SK-N-SH (cell line): ENCODE measurements at regions of chr19 and their contacts with region 1.

Region 1: GRCh38 chr19:44845612-44846454 is at the start of gene NECTIN2:
- DNase-seq: peak; percentile 98
- H3K4me3 ChIP-seq: peak within 1 kb of the TSS; percentile 71 to 98
- H3K27ac ChIP-seq: peak within 1 kb of the TSS; percentile 61 to 92
- H3K4me1 ChIP-seq: peaks cover 19 to 21% of the 10 kb centered on the region in 2 experiments; a peak in 3 of 4 replicates
- H3K27me3 ChIP-seq: no peaks in the 10 kb centered on the region
- CTCF ChIP-seq: peak; percentile 93
- EP300 ChIP-seq: no peak
- RAD21 ChIP-seq: peak; percentile 50
- polyA plus RNA-seq, gene NECTIN2: 96.6 and 121 TPM in 2 replicates

Region 2: GRCh38 chr19:44800461-44800860 is 45.4 kb before region 1 on chr19:
- CTCF ChIA-PET with region 1: interaction called, 18 read pairs
- POLR2A ChIA-PET with region 1: no interaction called
- DNase-seq: peak; percentile 89
- H3K4me3 ChIP-seq: peak overlapping the region in 1 of 2 experiments; percentile 41; a peak in 1 of 4 replicates
- H3K27ac ChIP-seq: no peak overlapping the region
- H3K4me1 ChIP-seq: no peaks in the 10 kb centered on the region; a peak in 1 of 4 replicates
- H3K27me3 ChIP-seq: peaks cover 34% of the 10 kb centered on the region
- CTCF ChIP-seq: peak; percentile 86
- EP300 ChIP-seq: no peak
- RAD21 ChIP-seq: peak; percentile 75

Region 3: GRCh38 chr19:44808463-44809371 is 37.1 kb before region 1 on chr19 and contains the start of gene BCAM:
- CTCF ChIA-PET with region 1: interaction called, 18 read pairs
- POLR2A ChIA-PET with region 1: no interaction called
- DNase-seq: peak; percentile 97
- H3K4me3 ChIP-seq: peak within 1 kb of the TSS; percentile 51 to 66
- H3K27ac ChIP-seq: no peak within 1 kb of the TSS
- H3K4me1 ChIP-seq: peaks cover 8 to 13% of the 10 kb centered on the region in 2 experiments; a peak in 2 of 4 replicates
- H3K27me3 ChIP-seq: peaks cover 34% of the 10 kb centered on the region
- CTCF ChIP-seq: no peak
- EP300 ChIP-seq: no peak
- RAD21 ChIP-seq: no peak
- polyA plus RNA-seq, gene BCAM: 9.7 and 34.0 TPM in 2 replicates

Region 4: DNA sequence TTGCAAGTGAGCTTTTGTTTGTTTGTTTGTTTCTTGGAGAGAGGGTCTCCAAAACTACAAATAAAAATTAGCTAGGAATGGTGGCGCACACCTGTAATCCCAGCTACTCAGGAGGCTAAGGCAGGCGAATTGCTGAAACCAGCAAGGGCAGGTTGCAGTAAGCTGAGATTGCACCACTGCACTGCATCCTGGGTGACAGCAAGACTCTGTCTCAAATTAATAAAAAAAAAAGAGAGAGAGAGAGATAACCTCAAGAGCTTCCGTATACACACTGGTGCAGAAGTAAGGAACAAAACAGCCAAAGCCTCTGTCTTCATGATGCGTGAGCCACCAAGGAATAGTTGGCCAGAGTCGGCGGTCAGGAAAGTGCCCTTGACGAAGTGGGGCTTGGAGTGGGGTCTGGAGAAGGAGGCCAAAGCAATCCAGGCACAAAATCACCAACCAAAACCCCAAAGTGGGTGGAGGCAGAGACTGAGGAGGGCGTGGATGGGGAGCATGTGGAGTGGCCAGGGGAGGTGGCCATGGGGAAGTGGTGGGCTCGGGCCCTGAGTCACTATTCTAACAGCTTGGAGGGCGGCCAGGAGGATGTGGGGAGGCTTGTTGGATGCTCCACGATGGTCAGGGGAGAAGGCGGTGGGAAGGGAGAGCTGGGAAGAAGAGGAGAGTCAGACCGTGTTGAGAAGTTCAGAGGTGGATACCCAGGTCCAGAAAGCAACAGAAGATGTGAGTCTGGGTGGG is 24.1 kb after region 1 on chr19:
- CTCF ChIA-PET with region 1: no interaction called
- POLR2A ChIA-PET with region 1: no interaction called
- DNase-seq: no peak
- H3K4me3 ChIP-seq: no peak overlapping the region
- H3K27ac ChIP-seq: peak overlapping the region in 1 of 2 experiments; percentile 75; a peak in 2 of 4 replicates
- H3K4me1 ChIP-seq: peaks cover 0 to 7% of the 10 kb centered on the region in 2 experiments; a peak in 1 of 4 replicates
- H3K27me3 ChIP-seq: no peaks in the 10 kb centered on the region
- CTCF ChIP-seq: no peak
- EP300 ChIP-seq: no peak
- RAD21 ChIP-seq: no peak